Activated naive CD4-positive, alpha-beta T cell treated with anti-CD3 and anti-CD28 coated beads for 36 hours (primary cell): ENCODE measurements at regions of chr6 and their contacts with region 1.

Region 1: DNA sequence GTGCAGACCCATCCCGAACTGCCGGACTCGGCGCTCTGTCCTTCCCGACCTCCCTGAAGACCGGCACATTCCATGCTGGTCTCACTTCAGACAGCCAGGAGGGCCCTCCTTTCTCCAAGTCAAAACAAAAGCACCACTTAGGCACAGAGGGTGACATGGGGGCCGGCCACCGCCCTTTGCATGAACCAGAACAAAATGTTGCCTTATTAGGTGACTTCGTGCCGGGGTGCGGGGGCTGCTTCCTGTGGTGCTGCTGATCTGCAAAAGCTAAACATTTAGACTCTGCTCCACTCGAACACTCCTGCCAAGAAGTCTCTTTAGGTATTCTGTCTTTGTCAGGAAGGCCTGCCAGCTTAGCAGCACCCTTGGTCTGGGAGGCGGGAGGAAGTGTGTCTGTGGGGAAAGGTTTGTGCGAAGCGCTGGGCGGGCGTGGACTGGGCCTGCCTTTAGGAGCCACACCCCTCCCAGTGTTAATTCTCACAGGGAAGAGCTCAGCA is 133.8 kb downstream of the SMOC2 start:
- DNase-seq: no peak
- H3K4me3 Mint-ChIP-seq: no peak overlapping the region
- H3K27ac Mint-ChIP-seq: no peak overlapping the region
- H3K4me1 Mint-ChIP-seq: no peaks in the 10 kb centered on the region
- H3K27me3 Mint-ChIP-seq: no peaks in the 10 kb centered on the region

Region 2: DNA sequence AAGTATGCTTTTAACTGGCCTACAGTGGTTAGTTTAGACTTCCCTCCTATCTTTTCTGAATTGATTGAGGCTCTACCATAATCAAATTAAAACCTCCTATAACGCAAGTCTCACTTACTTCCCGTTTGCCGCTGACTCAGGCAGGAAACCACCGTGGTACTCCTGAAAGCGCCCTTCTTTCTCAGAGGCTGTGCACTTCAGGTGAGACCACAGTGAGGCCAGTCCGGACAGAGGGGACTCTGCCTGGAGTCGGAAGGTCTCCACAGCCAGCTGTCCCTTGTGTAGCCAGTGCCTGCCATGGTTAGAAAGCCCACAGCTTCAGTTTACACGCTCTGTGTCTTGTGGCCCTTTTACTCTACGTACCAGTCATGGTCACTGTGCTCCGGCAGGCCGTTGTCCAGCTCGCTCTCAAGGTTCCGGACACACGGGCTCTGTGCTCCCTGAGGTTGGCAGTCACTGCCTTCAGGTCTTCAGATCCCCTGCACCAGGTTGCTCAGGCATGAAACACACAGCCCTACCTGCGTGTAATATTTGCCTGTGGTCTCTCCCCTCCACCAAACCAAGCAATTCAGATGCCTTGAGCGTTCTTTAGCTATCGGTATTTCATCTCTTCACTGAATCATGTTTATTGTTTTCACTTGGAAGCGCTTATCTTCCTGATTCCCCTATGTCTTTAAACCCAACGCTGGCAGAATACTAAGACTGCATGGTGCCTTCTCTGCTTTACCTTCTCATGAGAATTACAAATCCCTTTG is 45.0 kb after region 1 on chr6:
- CTCF ChIA-PET with region 1: no interaction called
- intact Hi-C with region 1: loop called (anchors 2 kb)
- DNase-seq: peak; percentile 62
- H3K4me3 Mint-ChIP-seq: no peak overlapping the region
- H3K27ac Mint-ChIP-seq: no peak overlapping the region
- H3K4me1 Mint-ChIP-seq: peaks cover 13% of the 10 kb centered on the region
- H3K27me3 Mint-ChIP-seq: peaks cover 7% of the 10 kb centered on the region

Region 3: GRCh38 chr6:170037541-170038250 is 1462.9 kb after region 1 on chr6:
- CTCF ChIA-PET with region 1: no interaction called
- intact Hi-C with region 1: no loop called
- DNase-seq: no peak
- H3K4me3 Mint-ChIP-seq: no peak overlapping the region
- H3K27ac Mint-ChIP-seq: no peak overlapping the region
- H3K4me1 Mint-ChIP-seq: no peaks in the 10 kb centered on the region
- H3K27me3 Mint-ChIP-seq: peaks cover 2% of the 10 kb centered on the region